Activated B cell treated with CpG ODN at 0.5 μM for 24 hours (primary cell): ENCODE measurements at regions of chr11 and their contacts with region 1.

Region 1: GRCh38 chr11:125592305-125593112 is at the start of gene STT3A:
- DNase-seq: peak; percentile 90
- ATAC-seq: peak; percentile 92
- H3K4me3 Mint-ChIP-seq: peak within 1 kb of the TSS; percentile 95
- H3K27ac Mint-ChIP-seq: peak within 1 kb of the TSS; percentile 99
- H3K4me1 Mint-ChIP-seq: peaks cover 58% of the 10 kb centered on the region
- H3K27me3 Mint-ChIP-seq: no peaks in the 10 kb centered on the region
- CTCF ChIP-seq: no peak
- total RNA-seq, gene STT3A: 79.4 and 86.5 TPM in 2 replicates

Region 2: DNA sequence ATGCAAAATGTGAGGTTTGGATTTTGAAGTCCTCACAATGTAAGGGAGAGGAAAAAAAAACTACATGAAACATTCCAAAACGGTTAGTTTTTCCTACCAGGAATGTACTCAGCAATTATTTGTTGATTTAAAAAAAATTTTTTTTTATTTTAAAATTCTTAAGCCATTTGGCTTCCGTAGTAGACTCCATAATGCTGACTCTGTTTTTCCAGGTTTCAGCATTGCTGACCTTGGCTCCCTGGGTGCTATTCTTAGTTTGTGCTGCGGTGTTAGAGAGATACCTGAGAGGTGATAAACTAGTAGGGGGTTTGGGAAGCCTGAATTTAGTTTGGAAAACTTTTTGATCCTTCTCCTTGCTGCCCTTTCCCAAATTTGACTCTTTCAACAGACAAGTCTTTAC is 10.7 kb after region 1 on chr11:
- CTCF ChIA-PET with region 1: no interaction called
- POLR2A ChIA-PET with region 1: interaction called, 11 read pairs
- intact Hi-C with region 1: no loop called
- DNase-seq: no peak
- ATAC-seq: no peak
- H3K4me3 Mint-ChIP-seq: no peak overlapping the region
- H3K27ac Mint-ChIP-seq: no peak overlapping the region
- H3K4me1 Mint-ChIP-seq: no peaks in the 10 kb centered on the region
- H3K27me3 Mint-ChIP-seq: no peaks in the 10 kb centered on the region
- CTCF ChIP-seq: no peak